Caco-2 (cell line): ENCODE measurements at regions of chr17 and their contacts with region 1.

Region 1: GRCh38 chr17:43778337-43779144 is at the start of gene DUSP3:
- DNase-seq: peak; percentile 98
- H3K4me3 ChIP-seq: peak within 1 kb of the TSS; percentile 98
- H3K4me3 Mint-ChIP-seq: peak within 1 kb of the TSS; percentile 77
- H3K27ac Mint-ChIP-seq: peak within 1 kb of the TSS; percentile 97
- H3K4me1 ChIP-seq: peaks cover 28% of the 10 kb centered on the region
- H3K4me1 Mint-ChIP-seq: peaks cover 29% of the 10 kb centered on the region
- H3K27me3 ChIP-seq: no peaks in the 10 kb centered on the region
- H3K27me3 Mint-ChIP-seq: no peaks in the 10 kb centered on the region
- CTCF ChIP-seq: no peak
- total RNA-seq, gene DUSP3: 78.8 and 86.3 TPM in 2 replicates

Region 2: DNA sequence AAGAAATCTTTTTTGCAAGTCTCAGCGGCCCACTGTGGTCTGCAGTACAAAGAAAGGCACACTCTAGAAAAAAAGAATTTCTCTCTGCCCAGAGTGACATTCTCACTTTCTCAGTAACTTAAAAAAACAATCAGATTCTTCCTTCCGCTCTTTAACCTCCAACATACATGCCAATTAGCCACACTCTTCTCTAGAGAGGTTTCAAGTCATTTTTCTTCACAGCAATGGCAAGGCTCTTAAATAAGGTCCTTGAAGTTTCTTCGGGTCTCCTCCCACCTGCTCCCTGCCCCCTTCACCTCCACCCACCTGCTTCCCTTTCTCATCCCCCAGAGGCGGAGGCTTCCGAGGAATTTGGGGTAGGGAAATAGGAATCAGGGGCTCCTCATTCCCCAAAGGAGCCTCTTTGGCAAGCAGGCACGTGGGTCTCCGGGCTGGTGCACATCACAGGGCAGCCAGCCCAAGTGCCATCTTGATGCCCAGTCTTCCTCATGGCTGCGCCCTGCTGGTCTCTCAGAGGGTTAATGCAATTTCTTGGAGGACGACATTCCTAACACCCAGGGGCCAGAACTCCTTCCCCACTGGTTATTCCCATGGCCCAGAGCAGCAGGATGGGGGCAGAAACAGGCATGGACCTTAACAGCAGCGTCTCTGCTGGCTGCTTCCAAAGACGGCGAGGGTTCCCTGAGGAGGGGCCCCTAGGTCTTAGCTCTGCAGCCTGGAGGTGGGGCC is 116.0 kb before region 1 on chr17:
- CTCF ChIA-PET with region 1: no interaction called
- POLR2A ChIA-PET with region 1: no interaction called
- intact Hi-C with region 1: no loop called
- DNase-seq: peak in 1 of 2 experiments; percentile 62
- H3K4me3 ChIP-seq: no peak overlapping the region
- H3K4me3 Mint-ChIP-seq: no peak overlapping the region
- H3K27ac Mint-ChIP-seq: peak overlapping the region; percentile 86
- H3K4me1 ChIP-seq: peaks cover 76% of the 10 kb centered on the region
- H3K4me1 Mint-ChIP-seq: peaks cover 35% of the 10 kb centered on the region
- H3K27me3 ChIP-seq: no peaks in the 10 kb centered on the region
- H3K27me3 Mint-ChIP-seq: no peaks in the 10 kb centered on the region
- CTCF ChIP-seq: no peak

Region 3: GRCh38 chr17:43766413-43767052 is 12.0 kb before region 1 on chr17:
- CTCF ChIA-PET with region 1: interaction called, 5 read pairs
- POLR2A ChIA-PET with region 1: interaction called, 22 read pairs
- intact Hi-C with region 1: no loop called
- DNase-seq: peak in 1 of 2 experiments; percentile 72
- H3K4me3 ChIP-seq: no peak overlapping the region
- H3K4me3 Mint-ChIP-seq: no peak overlapping the region
- H3K27ac Mint-ChIP-seq: no peak overlapping the region
- H3K4me1 ChIP-seq: no peaks in the 10 kb centered on the region
- H3K4me1 Mint-ChIP-seq: no peaks in the 10 kb centered on the region
- H3K27me3 ChIP-seq: no peaks in the 10 kb centered on the region
- H3K27me3 Mint-ChIP-seq: no peaks in the 10 kb centered on the region
- CTCF ChIP-seq: peak; percentile 88 to 90

Region 4: DNA sequence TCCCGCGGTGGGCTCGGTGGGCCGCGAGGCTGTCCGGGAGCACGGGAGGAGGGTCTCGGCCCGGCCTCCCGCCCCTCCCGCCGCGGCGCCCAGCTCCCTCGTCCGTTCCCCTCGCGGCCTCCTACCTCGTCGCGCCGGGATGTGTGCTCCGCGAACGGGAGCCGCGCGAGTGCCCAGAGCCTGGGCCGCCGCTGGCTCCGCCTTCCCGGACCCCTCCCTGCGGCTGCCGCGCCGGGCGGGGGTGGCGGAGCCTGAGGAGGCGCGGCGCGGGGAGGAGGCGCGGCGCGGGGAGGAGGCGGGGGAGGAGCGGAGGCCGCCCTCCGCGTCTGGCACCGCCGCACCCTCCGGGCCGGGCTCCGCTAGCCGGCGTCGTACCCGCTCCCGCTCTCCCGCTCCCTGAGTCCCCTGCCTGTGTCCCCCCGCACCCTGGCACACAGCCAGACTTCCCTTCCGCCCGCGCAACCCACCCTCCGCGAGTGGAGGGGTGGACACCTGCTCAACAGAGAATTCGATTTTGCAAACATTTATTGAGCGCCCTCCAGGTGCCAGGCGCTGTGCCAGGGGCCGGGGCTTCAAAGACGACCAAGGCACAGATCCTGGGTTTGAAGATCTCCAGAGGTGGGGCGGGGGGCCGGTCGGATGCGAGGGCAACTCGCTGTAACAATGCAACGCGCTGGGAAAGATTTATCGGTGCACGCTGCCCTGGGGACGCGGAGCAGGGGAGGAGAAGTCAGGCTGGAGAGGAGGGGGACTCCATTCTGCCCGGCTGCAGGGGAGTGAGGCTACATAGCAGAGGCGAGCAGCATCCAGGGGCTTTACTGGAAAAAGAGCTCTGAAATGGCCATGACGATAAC is 54.7 kb after region 1 on chr17 and contains the start of gene MPP3:
- CTCF ChIA-PET with region 1: no interaction called
- POLR2A ChIA-PET with region 1: interaction called, 4 read pairs
- intact Hi-C with region 1: loop called (anchors 5 kb)
- DNase-seq: peak; percentile 54 to 77
- H3K4me3 ChIP-seq: peak within 1 kb of the TSS; percentile 59
- H3K4me3 Mint-ChIP-seq: peak within 1 kb of the TSS; percentile 82
- H3K27ac Mint-ChIP-seq: no peak within 1 kb of the TSS
- H3K4me1 ChIP-seq: peaks cover 5% of the 10 kb centered on the region; the same call in 1 of the 2 replicates
- H3K4me1 Mint-ChIP-seq: peaks cover 7% of the 10 kb centered on the region
- H3K27me3 ChIP-seq: no peaks in the 10 kb centered on the region
- H3K27me3 Mint-ChIP-seq: peaks cover 9% of the 10 kb centered on the region
- CTCF ChIP-seq: no peak
- total RNA-seq, gene MPP3: 7.9 and 8.3 TPM in 2 replicates

Region 5: DNA sequence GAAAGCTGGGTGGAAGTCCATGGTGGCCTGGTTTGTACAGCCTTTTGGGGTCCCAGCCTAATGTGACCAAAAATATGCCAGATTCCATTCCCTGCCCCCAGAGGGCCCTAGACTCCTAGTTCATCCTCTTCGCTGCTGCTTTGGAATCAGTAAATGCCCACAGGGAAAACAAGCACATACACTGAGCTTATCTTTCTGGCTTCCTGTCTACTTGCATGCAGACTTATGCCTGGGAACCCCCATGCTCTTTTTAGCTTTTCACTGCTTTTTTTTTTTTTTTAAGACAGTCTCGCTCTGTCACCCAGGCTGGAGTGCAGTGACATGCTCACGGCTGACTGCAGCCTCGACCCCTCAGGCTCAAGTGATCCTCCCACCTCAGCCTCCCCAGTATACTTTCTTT is 62.3 kb after region 1 on chr17:
- CTCF ChIA-PET with region 1: interaction called, 15 read pairs
- POLR2A ChIA-PET with region 1: interaction called, 20 read pairs
- intact Hi-C with region 1: loop called (anchors 1 kb)
- DNase-seq: peak in 1 of 2 experiments; percentile 49
- H3K4me3 ChIP-seq: no peak overlapping the region
- H3K4me3 Mint-ChIP-seq: no peak overlapping the region
- H3K27ac Mint-ChIP-seq: no peak overlapping the region
- H3K4me1 ChIP-seq: peaks cover 9% of the 10 kb centered on the region; the same call in 1 of the 2 replicates
- H3K4me1 Mint-ChIP-seq: peaks cover 20% of the 10 kb centered on the region
- H3K27me3 ChIP-seq: no peaks in the 10 kb centered on the region
- H3K27me3 Mint-ChIP-seq: peaks cover 10% of the 10 kb centered on the region
- CTCF ChIP-seq: peak; percentile 29 to 35